ENCODE measurements at regions of chr5 and their contacts with region 1.

Region 1: GRCh38 chr5:94784536-94785510 is 166.4 kb downstream of the SLF1 start:
- DNase-seq: no peak
- ATAC-seq: 0 out of 3 replicates have a peak, but pooled peaks have one; percentile 45
- H3K4me3 ChIP-seq: no peak overlapping the region
- H3K27ac ChIP-seq: no peak overlapping the region
- H3K4me1 ChIP-seq: peaks cover 0 to 4% of the 10 kb centered on the region in 2 experiments; a peak in 1 of 5 replicates
- H3K27me3 ChIP-seq: no peaks in the 10 kb centered on the region
- CTCF ChIP-seq: peak in 1 of 3 experiments; percentile 60; a peak in 2 of 6 replicates
- EP300 ChIP-seq: no peak
- POLR2A ChIP-seq: no peak
- RAD21 ChIP-seq: peak; percentile 37 to 56; a peak in 3 of 4 replicates

Region 2: GRCh38 chr5:94618493-94619328 is 166.1 kb before region 1 on chr5 and contains the starts of genes KIAA0825 and SLF1:
- CTCF ChIA-PET with region 1: no interaction called
- POLR2A ChIA-PET with region 1: no interaction called
- in situ Hi-C with region 1: no loop called
- intact Hi-C with region 1: loop called (anchors 5 kb)
- DNase-seq: peak; percentile 54 to 91 (median 72)
- ATAC-seq: peak; percentile 92
- H3K4me3 ChIP-seq: peak within 1 kb of the TSS; percentile 80
- H3K27ac ChIP-seq: peak within 1 kb of the TSS; percentile 82
- H3K4me1 ChIP-seq: peaks cover 3 to 4% of the 10 kb centered on the region in 2 experiments; a peak in 1 of 5 replicates
- H3K27me3 ChIP-seq: no peaks in the 10 kb centered on the region
- CTCF ChIP-seq: no peak
- EP300 ChIP-seq: peak; percentile 14; the same call in 1 of the 2 replicates
- POLR2A ChIP-seq: peak; percentile 79
- RAD21 ChIP-seq: no peak
- polyA plus RNA-seq, gene KIAA0825: 0.13 to 0.14 TPM
- polyA plus RNA-seq, gene SLF1: 16.3 to 29.2 TPM

Region 3: DNA sequence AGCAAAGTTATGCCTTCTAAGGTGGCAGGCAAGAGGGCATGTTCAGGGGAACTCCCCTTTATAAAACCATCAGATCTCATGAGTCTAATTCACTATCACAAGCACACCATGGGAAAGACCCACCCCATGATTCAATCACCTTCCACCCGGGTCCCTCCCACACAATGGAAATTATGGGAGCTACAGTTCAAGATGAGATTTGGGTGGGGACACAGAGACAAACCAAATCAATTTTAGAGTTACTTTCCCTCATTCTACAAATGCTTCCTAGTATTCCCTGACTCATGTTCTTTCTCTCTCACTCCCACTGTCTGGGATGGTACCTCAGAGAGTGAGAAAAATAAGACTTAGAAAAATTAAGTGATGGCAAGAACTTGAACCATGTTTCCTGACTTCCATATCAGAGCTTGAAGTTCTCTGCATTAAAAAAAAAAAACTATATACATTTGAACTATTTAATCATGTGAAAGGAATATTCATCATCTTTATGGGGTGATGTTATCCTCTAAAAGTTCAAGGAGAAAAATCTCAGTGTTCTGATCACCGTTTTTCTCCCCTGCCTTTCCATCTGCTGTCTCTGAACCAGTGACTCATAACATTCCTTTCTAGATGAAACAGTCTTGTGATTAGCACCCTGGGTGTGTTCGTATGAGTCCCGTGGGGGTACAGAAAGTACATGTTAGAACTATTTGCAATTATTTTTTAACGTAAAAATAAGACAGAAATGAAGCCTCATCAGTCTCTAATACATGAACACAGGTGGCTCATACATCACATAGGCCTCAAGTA is 116.6 kb after region 1 on chr5:
- CTCF ChIA-PET with region 1: no interaction called
- POLR2A ChIA-PET with region 1: no interaction called
- in situ Hi-C with region 1: no loop called
- intact Hi-C with region 1: no loop called
- DNase-seq: no peak
- ATAC-seq: no peak
- H3K4me3 ChIP-seq: no peak overlapping the region
- H3K27ac ChIP-seq: no peak overlapping the region
- H3K4me1 ChIP-seq: no peaks in the 10 kb centered on the region
- H3K27me3 ChIP-seq: no peaks in the 10 kb centered on the region
- CTCF ChIP-seq: no peak
- EP300 ChIP-seq: no peak
- POLR2A ChIP-seq: no peak
- RAD21 ChIP-seq: no peak

Measured in K562 (cell line).